Cardiac septum (tissue), 1 donor: ENCODE measurements at regions of chr6 and their contacts with region 1.

Region 1: DNA sequence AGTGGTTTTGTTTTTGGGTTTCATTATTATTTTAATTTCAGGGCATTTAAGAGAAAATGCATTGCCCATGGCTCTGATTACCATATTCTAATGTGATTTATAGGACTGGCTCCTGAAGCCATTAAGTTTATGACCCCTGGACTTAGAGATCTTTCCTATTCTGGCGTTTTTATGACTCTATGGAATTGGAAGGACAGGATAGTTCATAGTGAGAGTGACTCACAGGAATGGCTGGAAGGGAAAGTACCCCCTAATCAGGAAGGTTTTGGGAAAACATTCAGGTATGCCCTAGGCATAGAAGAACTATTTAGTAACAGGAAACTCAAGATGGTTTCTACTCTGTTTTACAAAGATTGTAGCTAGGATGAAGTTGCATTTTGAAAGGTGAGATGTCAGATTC is 108.6 kb upstream of the SLC2A12 start:
- DNase-seq: no peak

Region 2: GRCh38 chr6:134002821-134003220 is 158.2 kb before region 1 on chr6:
- intact Hi-C with region 1: no loop called
- DNase-seq: no peak

Region 3: GRCh38 chr6:134303903-134304302 is 142.9 kb after region 1 on chr6:
- intact Hi-C with region 1: no loop called
- DNase-seq: no peak

Region 4: DNA sequence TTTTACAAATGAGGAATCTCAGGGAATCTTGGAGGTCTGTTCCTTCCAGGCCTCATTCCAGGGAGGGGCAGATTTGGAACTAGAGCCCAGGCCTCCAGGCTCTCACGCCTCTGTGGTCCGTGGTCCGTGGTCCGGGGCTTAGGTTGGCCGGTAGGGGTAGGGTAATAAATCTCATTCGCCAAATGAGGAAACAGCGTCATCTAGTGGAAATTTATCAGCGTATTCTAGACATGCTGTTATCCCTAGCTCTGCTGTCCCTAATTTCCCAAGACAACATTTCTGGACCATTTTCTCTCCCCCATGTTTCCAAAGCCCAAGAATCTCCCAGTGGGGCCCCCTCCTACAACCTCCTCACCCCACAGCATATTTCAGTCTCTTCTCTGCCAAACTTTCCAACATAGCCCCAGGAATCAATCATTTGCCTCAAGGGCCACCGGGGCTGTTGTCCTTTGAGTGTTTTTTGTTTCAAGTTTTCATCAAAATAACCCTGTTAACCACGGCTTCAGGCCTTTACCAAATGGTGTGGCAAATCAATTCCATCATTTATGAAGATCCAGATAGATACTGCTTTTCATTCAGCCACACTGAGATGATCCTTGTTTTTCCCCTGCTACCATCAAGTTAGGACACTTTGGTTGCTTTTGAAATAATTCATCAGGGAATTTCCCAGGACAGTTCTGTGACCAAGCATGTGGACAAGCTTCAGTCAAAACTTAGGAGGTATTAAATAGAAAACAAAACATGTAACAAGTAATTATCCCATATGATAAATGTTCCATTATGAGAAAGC is 662.1 kb after region 1 on chr6:
- intact Hi-C with region 1: loop called (anchors 5 kb)
- DNase-seq: no peak

Region 5: GRCh38 chr6:134882426-134883038 is 721.5 kb after region 1 on chr6:
- intact Hi-C with region 1: loop called (anchors 5 kb)
- DNase-seq: no peak

Region 6: DNA sequence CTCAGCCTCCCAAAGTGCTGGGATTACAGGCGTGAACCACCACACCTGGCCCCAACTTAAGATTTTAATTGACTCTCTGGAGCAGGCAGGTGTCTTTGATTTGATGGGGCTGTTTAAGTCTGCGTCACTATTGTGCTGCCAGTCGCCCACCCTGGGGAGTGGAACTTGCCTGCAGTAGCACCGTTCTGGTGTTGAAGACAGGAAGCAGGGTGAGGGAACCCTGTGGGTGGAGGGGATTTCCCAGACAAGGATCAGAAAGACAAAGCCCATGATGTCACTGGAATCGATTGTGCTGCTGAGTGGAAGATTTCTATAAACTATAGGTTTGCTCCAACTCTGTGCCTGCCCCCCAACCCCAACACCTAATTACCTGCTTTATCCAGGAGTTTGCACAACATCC is 777.9 kb after region 1 on chr6:
- intact Hi-C with region 1: loop called (anchors 5 kb)
- DNase-seq: no peak